Activated CD4-positive, alpha-beta memory T cell treated with anti-CD3 and anti-CD28 coated beads for 36 hours (primary cell): ENCODE measurements at regions of chr7 and their contacts with region 1.

Region 1: DNA sequence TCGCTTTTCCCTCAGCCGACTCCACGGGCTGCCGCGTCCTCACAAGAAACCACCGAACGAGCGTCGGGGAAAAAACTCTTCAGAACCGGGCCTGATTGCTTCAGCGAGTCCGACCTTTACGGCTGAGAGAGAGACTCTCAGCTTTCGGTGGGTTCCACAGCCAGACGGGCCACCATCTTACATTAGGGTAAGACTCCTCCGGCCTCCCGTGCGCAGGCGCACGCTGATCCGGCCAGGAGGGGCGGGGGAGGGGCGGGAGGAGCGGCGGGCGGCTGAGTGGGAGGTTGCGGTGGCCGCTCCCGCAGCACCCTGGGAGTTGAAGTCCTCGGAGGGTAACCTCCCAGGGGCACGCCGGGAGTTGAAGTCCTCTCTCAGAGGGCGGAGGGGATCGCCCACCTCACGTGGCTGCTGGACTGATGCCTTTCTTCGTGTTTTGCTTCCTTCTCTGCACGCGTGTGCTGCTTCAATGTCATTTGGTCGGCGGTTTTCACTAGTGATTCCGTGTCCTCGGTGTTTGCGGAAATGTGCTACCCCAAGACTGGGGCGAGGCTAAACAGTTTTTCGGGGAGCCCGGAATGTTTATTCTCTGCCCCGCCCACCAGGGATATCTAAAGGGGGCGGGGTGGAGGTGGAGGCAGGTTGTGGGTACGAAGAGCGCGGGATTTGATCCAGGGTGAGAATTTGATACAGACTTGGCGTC is at the start of gene CNOT4:
- DNase-seq: peak; percentile 98
- H3K4me3 Mint-ChIP-seq: no peak within 1 kb of the TSS
- H3K27ac Mint-ChIP-seq: no peak within 1 kb of the TSS
- H3K4me1 Mint-ChIP-seq: peaks cover 9% of the 10 kb centered on the region
- H3K27me3 Mint-ChIP-seq: no peaks in the 10 kb centered on the region
- total RNA-seq, gene CNOT4: 16.1 to 17.4 TPM

Region 2: GRCh38 chr7:135211179-135211945 is 298.7 kb before region 1 on chr7 and contains the start of gene WDR91:
- CTCF ChIA-PET with region 1: no interaction called
- POLR2A ChIA-PET with region 1: no interaction called
- intact Hi-C with region 1: loop called (anchors 1 kb)
- DNase-seq: peak; percentile 98
- H3K4me3 Mint-ChIP-seq: peak within 1 kb of the TSS; percentile 93
- H3K27ac Mint-ChIP-seq: peak within 1 kb of the TSS; percentile 83
- H3K4me1 Mint-ChIP-seq: peaks cover 23% of the 10 kb centered on the region
- H3K27me3 Mint-ChIP-seq: no peaks in the 10 kb centered on the region
- total RNA-seq, gene WDR91: 10.3 to 11.0 TPM

Region 3: DNA sequence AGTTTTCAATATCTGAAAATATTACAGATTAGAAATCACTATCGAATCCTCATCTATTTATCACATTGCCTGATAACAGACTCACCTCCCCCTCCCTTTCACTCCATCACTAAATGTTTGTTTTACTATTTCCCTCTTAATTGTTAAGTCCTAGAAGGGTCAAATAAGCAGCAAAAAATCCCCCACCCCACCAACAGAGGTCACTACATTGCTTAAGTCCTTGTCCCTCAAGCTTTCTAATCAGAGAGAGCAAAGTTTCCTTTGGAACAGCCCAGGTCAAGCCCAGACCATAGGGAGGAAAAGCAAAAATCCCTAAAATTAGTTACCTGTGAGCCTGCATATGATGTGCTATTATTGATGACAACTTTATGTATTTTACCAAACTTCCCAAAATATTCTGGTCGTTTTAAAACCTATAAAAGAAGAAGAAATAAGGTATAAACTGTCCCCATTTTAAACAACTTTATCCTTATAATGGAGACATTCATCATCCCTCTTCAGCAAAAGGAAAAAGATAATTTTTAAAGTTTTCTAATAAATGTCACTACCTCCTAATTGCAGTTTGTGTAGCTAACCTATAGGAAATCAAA is 95.1 kb before region 1 on chr7:
- CTCF ChIA-PET with region 1: interaction called, 4 read pairs
- POLR2A ChIA-PET with region 1: no interaction called
- intact Hi-C with region 1: loop called (anchors 1 kb)
- DNase-seq: peak; percentile 46
- H3K4me3 Mint-ChIP-seq: no peak overlapping the region
- H3K27ac Mint-ChIP-seq: no peak overlapping the region
- H3K4me1 Mint-ChIP-seq: peaks cover 4% of the 10 kb centered on the region
- H3K27me3 Mint-ChIP-seq: no peaks in the 10 kb centered on the region

Region 4: DNA sequence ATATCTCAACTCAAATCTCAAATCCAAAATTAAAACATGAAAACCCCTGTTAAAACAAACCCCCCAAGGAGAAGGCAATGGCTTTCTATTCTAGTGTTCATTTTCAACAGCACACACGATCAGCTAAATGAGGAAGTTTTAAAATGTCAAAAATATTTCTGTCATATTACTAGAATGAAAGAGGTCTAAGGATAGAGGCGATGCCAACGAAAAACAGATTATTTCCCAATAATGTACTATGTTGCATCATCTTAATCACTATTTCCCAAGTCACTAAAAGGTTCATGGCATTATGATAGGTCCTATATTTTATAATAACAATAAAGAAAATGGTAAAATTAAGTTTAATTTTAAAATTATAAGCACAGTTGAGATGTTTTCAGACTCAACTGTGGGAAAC is 10.2 kb before region 1 on chr7:
- CTCF ChIA-PET with region 1: interaction called, 3 read pairs
- POLR2A ChIA-PET with region 1: interaction called, 3 read pairs
- intact Hi-C with region 1: loop called (anchors 1 kb)
- DNase-seq: no peak
- H3K4me3 Mint-ChIP-seq: no peak overlapping the region
- H3K27ac Mint-ChIP-seq: no peak overlapping the region
- H3K4me1 Mint-ChIP-seq: peaks cover 43% of the 10 kb centered on the region
- H3K27me3 Mint-ChIP-seq: no peaks in the 10 kb centered on the region

Region 5: GRCh38 chr7:135558337-135558767 is 48.3 kb after region 1 on chr7:
- CTCF ChIA-PET with region 1: interaction called, 3 read pairs
- POLR2A ChIA-PET with region 1: interaction called, 3 read pairs
- intact Hi-C with region 1: loop called (anchors 1 kb)
- DNase-seq: peak; percentile 79
- H3K4me3 Mint-ChIP-seq: no peak overlapping the region
- H3K27ac Mint-ChIP-seq: no peak overlapping the region
- H3K4me1 Mint-ChIP-seq: peaks cover 16% of the 10 kb centered on the region
- H3K27me3 Mint-ChIP-seq: no peaks in the 10 kb centered on the region